GM10248 (cell line): ENCODE measurements at regions of chr2 and their contacts with region 1.

Region 1: GRCh38 chr2:143815082-143815481 is 685.9 kb downstream of the ARHGAP15 start:
- DNase-seq: no peak
- CTCF ChIP-seq: no peak

Region 2: DNA sequence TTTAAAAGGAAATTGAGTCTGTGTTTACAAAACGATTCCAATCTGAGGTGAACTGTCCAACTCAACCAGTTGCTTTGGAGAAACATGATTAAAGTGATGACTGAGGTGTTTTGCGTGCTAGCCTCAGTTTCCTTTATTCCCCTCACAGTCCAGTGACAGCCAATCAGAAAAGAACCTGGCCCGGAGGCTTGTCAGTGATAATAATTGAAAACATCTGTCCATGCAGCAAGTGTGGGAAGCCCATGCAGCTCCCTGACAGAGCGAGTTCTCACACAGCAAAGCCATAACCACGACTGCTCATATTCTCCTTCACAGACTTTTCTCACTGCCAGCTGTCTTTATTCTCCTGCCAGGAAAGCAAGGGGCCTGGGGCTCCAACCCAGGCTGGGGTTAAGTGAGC is 72.5 kb before region 1 on chr2:
- CTCF ChIA-PET with region 1: no interaction called
- POLR2A ChIA-PET with region 1: no interaction called
- DNase-seq: no peak
- CTCF ChIP-seq: no peak

Region 3: GRCh38 chr2:143802871-143803650 is 12.0 kb before region 1 on chr2:
- CTCF ChIA-PET with region 1: interaction called, 11 read pairs
- POLR2A ChIA-PET with region 1: no interaction called
- DNase-seq: peak; percentile 55
- CTCF ChIP-seq: peak; percentile 7